PC-3 (cell line): ENCODE measurements at regions of chr21 and their contacts with region 1.

Region 1: DNA sequence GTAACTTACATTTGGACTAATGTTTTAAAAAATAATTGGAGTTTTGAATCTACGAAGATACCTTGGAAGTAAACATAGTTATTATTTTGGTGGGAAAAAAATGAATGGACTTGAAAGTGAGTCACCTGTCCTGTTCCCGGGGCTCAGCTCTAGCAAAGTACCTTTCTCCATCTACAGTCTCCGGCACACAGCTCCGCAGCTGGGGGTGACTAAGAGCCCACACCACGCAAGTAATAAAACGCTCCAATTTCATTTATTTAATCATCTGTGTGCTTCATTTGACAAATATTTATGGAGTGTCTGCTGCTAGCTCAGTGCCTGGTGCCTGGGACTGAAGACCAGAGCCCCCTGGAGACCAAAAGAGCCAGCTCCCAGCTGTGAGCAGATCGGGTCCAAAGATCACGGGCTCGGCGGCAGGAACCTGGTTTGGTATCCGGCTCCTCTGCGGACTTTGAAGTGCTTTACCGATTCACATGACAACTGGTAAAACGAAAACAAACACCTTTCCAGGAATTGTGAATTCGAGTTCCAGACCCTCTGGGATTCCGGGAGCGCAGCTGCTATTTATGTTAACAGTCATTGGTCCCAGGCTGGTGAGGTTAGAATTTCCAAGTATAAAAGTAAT is 1.7 kb upstream of the RIPK4 start:
- DNase-seq: peak; percentile 97
- ATAC-seq: peak; percentile 67
- H3K4me3 ChIP-seq: peak overlapping the region; percentile 94
- H3K27ac ChIP-seq: peak overlapping the region; percentile 97
- H3K4me1 ChIP-seq: peaks cover 29% of the 10 kb centered on the region
- H3K27me3 ChIP-seq: no peaks in the 10 kb centered on the region
- CTCF ChIP-seq: peak; percentile 75

Region 2: GRCh38 chr21:41583274-41583790 is 185.2 kb before region 1 on chr21:
- CTCF ChIA-PET with region 1: interaction called, 3 read pairs
- POLR2A ChIA-PET with region 1: no interaction called
- intact Hi-C with region 1: loop called (anchors 1 kb)
- DNase-seq: peak; percentile 96
- ATAC-seq: peak; percentile 61
- H3K4me3 ChIP-seq: peak overlapping the region; percentile 31
- H3K27ac ChIP-seq: peak overlapping the region; percentile 98
- H3K4me1 ChIP-seq: peaks cover 54% of the 10 kb centered on the region
- H3K27me3 ChIP-seq: no peaks in the 10 kb centered on the region
- CTCF ChIP-seq: no peak

Region 3: DNA sequence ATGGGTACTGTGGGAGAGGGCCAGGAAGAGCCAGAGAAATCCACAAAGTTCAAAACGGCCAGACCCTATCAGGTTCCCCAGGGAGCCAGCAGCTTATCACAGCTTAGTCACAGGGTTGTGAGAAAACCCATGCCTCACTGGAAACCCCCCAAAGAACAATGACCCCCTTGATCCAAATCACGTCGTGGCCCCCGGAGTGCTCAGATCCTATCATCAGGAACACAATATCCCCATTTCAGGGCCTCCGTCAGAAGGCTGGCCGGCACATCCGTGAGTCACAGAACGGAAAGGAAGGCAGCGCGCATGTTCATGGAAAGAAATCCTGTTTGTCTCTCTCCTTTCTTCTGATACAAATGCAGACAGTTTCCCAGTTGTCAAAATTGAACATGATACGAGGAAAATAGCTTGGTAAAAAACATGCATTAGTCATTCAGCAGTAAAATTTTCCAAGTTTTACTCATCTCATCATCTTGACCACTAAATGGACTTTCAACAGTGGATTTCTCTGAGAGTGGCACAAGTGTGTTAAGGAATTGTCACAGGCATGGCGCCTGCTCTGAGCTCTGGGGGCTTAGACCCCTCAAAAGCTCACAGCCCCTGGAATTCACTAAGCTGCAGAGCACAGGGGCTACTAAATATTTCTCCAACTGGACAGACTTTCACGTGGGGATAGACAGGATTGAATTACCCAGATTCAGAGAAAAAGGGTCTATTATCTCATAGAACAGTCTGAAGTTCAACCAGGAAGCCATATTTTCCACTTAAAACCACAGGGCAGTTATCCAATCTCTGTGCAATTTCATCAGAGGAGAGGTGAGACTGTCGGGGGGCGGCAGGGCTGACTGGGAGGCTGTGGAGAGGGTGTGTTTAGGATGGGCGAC is 126.5 kb before region 1 on chr21:
- CTCF ChIA-PET with region 1: interaction called, 4 read pairs
- POLR2A ChIA-PET with region 1: interaction called, 16 read pairs
- intact Hi-C with region 1: no loop called
- DNase-seq: peak; percentile 97
- ATAC-seq: peak; percentile 87
- H3K4me3 ChIP-seq: peak overlapping the region; percentile 46
- H3K27ac ChIP-seq: peak overlapping the region; percentile 99
- H3K4me1 ChIP-seq: peaks cover 36% of the 10 kb centered on the region
- H3K27me3 ChIP-seq: no peaks in the 10 kb centered on the region
- CTCF ChIP-seq: no peak

Region 4: GRCh38 chr21:41684381-41685245 is 83.9 kb before region 1 on chr21:
- CTCF ChIA-PET with region 1: interaction called, 4 read pairs
- POLR2A ChIA-PET with region 1: no interaction called
- intact Hi-C with region 1: loop called (anchors 1 kb)
- DNase-seq: peak; percentile 86
- ATAC-seq: peak; percentile 70
- H3K4me3 ChIP-seq: peak overlapping the region; percentile 48
- H3K27ac ChIP-seq: peak overlapping the region; percentile 98
- H3K4me1 ChIP-seq: peaks cover 88% of the 10 kb centered on the region
- H3K27me3 ChIP-seq: no peaks in the 10 kb centered on the region
- CTCF ChIP-seq: no peak

Region 5: DNA sequence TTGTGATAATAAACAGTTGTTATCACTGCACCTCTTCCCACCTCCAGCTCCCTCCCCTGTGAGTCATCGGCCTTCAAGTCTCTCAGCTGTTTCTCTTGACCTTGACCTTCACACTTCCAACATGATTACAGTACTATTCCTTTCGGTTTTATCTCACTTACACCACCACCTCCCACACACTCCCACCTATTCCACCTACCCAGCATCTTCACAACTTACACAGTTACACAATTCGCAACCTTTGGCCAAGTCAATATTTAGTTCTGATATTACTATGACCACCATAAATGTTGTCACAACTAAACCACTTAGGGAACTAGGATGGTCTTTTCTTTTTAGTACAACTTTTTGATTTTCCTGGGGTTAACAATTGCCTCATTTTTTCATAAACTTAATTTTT is 61.9 kb before region 1 on chr21:
- CTCF ChIA-PET with region 1: no interaction called
- POLR2A ChIA-PET with region 1: no interaction called
- intact Hi-C with region 1: no loop called
- DNase-seq: no peak
- ATAC-seq: no peak
- H3K4me3 ChIP-seq: no peak overlapping the region
- H3K27ac ChIP-seq: peak overlapping the region; percentile 97
- H3K4me1 ChIP-seq: peaks cover 52% of the 10 kb centered on the region
- H3K27me3 ChIP-seq: no peaks in the 10 kb centered on the region
- CTCF ChIP-seq: no peak

Region 6: GRCh38 chr21:41816220-41817165 is 47.9 kb after region 1 on chr21:
- CTCF ChIA-PET with region 1: interaction called, 10 read pairs
- POLR2A ChIA-PET with region 1: interaction called, 4 read pairs
- intact Hi-C with region 1: loop called (anchors 1 kb)
- DNase-seq: peak; percentile 67
- ATAC-seq: peak; percentile 86
- H3K4me3 ChIP-seq: no peak overlapping the region
- H3K27ac ChIP-seq: peak overlapping the region; percentile 61
- H3K4me1 ChIP-seq: peaks cover 13% of the 10 kb centered on the region
- H3K27me3 ChIP-seq: no peaks in the 10 kb centered on the region
- CTCF ChIP-seq: peak; percentile 83

Region 7: GRCh38 chr21:41966041-41966684 is 197.6 kb after region 1 on chr21:
- CTCF ChIA-PET with region 1: no interaction called
- POLR2A ChIA-PET with region 1: interaction called, 4 read pairs
- intact Hi-C with region 1: loop called (anchors 5 kb)
- DNase-seq: peak; percentile 96
- ATAC-seq: peak; percentile 68
- H3K4me3 ChIP-seq: no peak overlapping the region
- H3K27ac ChIP-seq: peak overlapping the region; percentile 95
- H3K4me1 ChIP-seq: peaks cover 46% of the 10 kb centered on the region
- H3K27me3 ChIP-seq: no peaks in the 10 kb centered on the region
- CTCF ChIP-seq: peak; percentile 53